WTC11 (cell line): ENCODE measurements at regions of chr1 and their contacts with region 1.

Region 1: GRCh38 chr1:11499601-11500331 is 20.8 kb downstream of the DISP3 start:
- DNase-seq: peak; percentile 27
- ATAC-seq: peak; percentile 74
- H3K4me3 Mint-ChIP-seq: peak overlapping the region; percentile 43
- H3K27ac Mint-ChIP-seq: peak overlapping the region; percentile 88
- H3K4me1 Mint-ChIP-seq: peaks cover 35% of the 10 kb centered on the region
- H3K27me3 Mint-ChIP-seq: no peaks in the 10 kb centered on the region
- CTCF ChIP-seq: no peak

Region 2: GRCh38 chr1:11458811-11459275 is 40.9 kb before region 1 on chr1:
- CTCF ChIA-PET with region 1: no interaction called
- POLR2A ChIA-PET with region 1: no interaction called
- DNase-seq: no peak
- ATAC-seq: no peak
- H3K4me3 Mint-ChIP-seq: no peak overlapping the region
- H3K27ac Mint-ChIP-seq: no peak overlapping the region
- H3K4me1 Mint-ChIP-seq: peaks cover 5% of the 10 kb centered on the region; the same call in 1 of the 2 replicates
- H3K27me3 Mint-ChIP-seq: no peaks in the 10 kb centered on the region
- CTCF ChIP-seq: no peak

Region 3: DNA sequence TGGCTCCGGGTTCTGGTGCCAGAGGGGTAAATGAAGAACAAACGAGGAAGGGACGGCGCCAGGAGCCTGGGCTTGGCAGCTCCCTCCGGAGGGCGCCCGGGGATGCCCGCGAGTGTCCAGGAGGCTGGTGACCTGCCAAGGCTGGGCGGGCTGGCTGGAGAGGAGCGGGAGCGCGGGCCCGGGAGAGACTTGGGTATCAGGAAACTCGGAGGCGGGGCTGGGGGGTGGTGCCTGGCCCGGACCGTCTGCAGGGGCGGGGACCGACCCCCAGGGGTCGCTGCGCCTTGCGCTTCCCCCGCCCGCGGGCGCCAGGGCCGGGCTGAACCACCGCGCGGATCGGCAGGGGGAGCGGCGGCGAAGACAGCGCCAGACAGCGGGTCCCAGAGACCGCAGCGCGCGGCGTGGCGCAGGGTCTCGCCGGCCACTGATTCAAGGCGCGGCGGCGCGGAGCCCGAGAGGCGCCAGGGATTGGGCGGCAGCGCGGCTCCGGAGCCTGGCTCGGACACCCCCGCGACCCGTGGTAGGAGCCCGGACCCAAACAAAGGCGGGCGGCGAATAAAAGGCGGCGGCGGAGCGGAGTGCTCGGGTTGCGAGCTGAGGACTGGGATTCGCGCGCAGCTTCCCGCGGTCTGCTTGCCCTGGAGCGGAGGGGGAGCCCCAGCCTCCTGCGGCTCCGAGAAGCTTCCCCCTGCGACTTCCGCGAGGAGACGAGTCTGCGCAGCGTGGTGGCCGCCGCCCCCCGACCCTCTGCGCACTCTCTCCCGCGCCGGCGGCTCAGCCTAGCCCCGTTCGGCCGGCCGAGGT is 21.0 kb before region 1 on chr1 and contains the start of gene DISP3:
- CTCF ChIA-PET with region 1: interaction called, 15 read pairs
- POLR2A ChIA-PET with region 1: interaction called, 3 read pairs
- DNase-seq: peak; percentile 90
- ATAC-seq: peak; percentile 83
- H3K4me3 Mint-ChIP-seq: peak within 1 kb of the TSS; percentile 71
- H3K27ac Mint-ChIP-seq: no peak within 1 kb of the TSS
- H3K4me1 Mint-ChIP-seq: peaks cover 10% of the 10 kb centered on the region
- H3K27me3 Mint-ChIP-seq: peaks cover 40% of the 10 kb centered on the region
- CTCF ChIP-seq: peak; percentile 92
- total RNA-seq, gene DISP3: 5.9 to 6.1 TPM (median 6.0 TPM) in 3 replicates

Region 4: GRCh38 chr1:11486231-11487009 is 13.3 kb before region 1 on chr1:
- CTCF ChIA-PET with region 1: interaction called, 24 read pairs
- POLR2A ChIA-PET with region 1: interaction called, 3 read pairs
- DNase-seq: peak; percentile 7
- ATAC-seq: no peak
- H3K4me3 Mint-ChIP-seq: no peak overlapping the region
- H3K27ac Mint-ChIP-seq: no peak overlapping the region
- H3K4me1 Mint-ChIP-seq: peaks cover 23% of the 10 kb centered on the region
- H3K27me3 Mint-ChIP-seq: no peaks in the 10 kb centered on the region; the same call in 1 of the 2 replicates
- CTCF ChIP-seq: no peak

Region 5: GRCh38 chr1:11522400-11523235 is 22.9 kb after region 1 on chr1:
- CTCF ChIA-PET with region 1: no interaction called
- POLR2A ChIA-PET with region 1: no interaction called
- DNase-seq: peak; percentile 9
- ATAC-seq: no peak
- H3K4me3 Mint-ChIP-seq: no peak overlapping the region
- H3K27ac Mint-ChIP-seq: 0 out of 2 replicates have a peak overlapping the region, but pooled peaks have one; percentile 53
- H3K4me1 Mint-ChIP-seq: peaks cover 7% of the 10 kb centered on the region
- H3K27me3 Mint-ChIP-seq: no peaks in the 10 kb centered on the region
- CTCF ChIP-seq: no peak